Ovary (tissue), 10 donors: ENCODE measurements at regions of chr3 and their contacts with region 1.

Region 1: GRCh38 chr3:186821429-186822367 is 15.4 kb upstream of the RFC4 start:
- DNase-seq: no peak
- H3K4me3 ChIP-seq: no peak overlapping the region
- H3K27ac ChIP-seq: no peak overlapping the region
- H3K4me1 ChIP-seq: no peaks in the 10 kb centered on the region
- H3K27me3 ChIP-seq: no peaks in the 10 kb centered on the region
- CTCF ChIP-seq: no peak
- EP300 ChIP-seq: no peak
- POLR2A ChIP-seq: no peak

Region 2: GRCh38 chr3:186783073-186783730 is 38.5 kb before region 1 on chr3 and contains the start of gene EIF4A2:
- intact Hi-C with region 1: loop called in 1 of 4 experiments (anchors 5 kb)
- DNase-seq: peak; percentile 89 to 91 (median 90)
- H3K4me3 ChIP-seq: peak within 1 kb of the TSS; percentile 97
- H3K27ac ChIP-seq: peak within 1 kb of the TSS; percentile 91 to 97
- H3K4me1 ChIP-seq: peaks cover 14% of the 10 kb centered on the region
- H3K27me3 ChIP-seq: no peaks in the 10 kb centered on the region
- CTCF ChIP-seq: peak in 2 of 3 donors; percentile 18 to 23
- EP300 ChIP-seq: no peak
- POLR2A ChIP-seq: peak; percentile 89
- total RNA-seq, gene EIF4A2: 347 to 961 (median 629) TPM